Activated CD8-positive, alpha-beta T cell treated with anti-CD3 and anti-CD28 coated beads, Interleukin-2, amount 10 ng/mL, durations not matched to agents 7 days and 5 days (primary cell): ENCODE measurements at regions of chr14 and their contacts with region 1.

Region 1: GRCh38 chr14:74762917-74763802 is at the start of gene YLPM1:
- DNase-seq: peak; percentile 94
- ATAC-seq: peak; percentile 95
- H3K4me3 Mint-ChIP-seq: peak within 1 kb of the TSS; percentile 92
- H3K27ac Mint-ChIP-seq: peak within 1 kb of the TSS; percentile 86
- H3K4me1 Mint-ChIP-seq: peaks cover 40% of the 10 kb centered on the region
- H3K27me3 Mint-ChIP-seq: peaks cover 2% of the 10 kb centered on the region
- total RNA-seq, gene YLPM1: 58.2 to 58.4 TPM

Region 2: DNA sequence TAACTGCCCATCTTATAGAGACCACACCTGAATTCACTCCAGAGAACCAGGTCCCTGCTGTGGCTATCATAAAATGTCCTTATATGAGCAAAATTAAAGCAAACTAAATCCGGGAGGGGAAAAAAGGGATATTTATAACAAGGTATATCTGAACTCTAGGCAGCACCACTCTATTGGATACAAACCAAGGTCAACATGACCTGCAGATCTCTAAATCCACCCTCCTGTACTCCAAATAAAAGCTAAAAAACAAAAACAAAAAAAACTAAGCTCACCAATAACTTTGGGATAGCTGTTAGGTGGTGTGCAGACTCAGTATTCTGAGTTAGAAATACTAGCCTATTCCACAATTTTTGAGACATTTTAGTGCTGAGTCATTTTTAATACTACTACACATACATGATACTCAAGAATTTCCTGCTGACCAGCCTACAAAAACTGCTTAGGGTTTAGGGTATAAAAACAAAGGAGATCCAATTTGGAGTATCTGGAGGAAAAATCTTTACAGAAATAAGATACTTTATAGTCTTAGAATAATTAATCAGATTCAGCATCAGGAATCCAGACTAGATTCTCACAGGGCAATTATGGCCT is 104.5 kb before region 1 on chr14:
- CTCF ChIA-PET with region 1: no interaction called
- POLR2A ChIA-PET with region 1: no interaction called
- DNase-seq: no peak
- ATAC-seq: no peak
- H3K4me3 Mint-ChIP-seq: no peak overlapping the region
- H3K27ac Mint-ChIP-seq: no peak overlapping the region
- H3K4me1 Mint-ChIP-seq: no peaks in the 10 kb centered on the region
- H3K27me3 Mint-ChIP-seq: no peaks in the 10 kb centered on the region

Region 3: GRCh38 chr14:74784634-74785033 is 21.5 kb after region 1 on chr14:
- CTCF ChIA-PET with region 1: interaction called, 11 read pairs
- POLR2A ChIA-PET with region 1: interaction called, 5 read pairs
- DNase-seq: no peak
- ATAC-seq: peak; percentile 23
- H3K4me3 Mint-ChIP-seq: no peak overlapping the region
- H3K27ac Mint-ChIP-seq: peak overlapping the region; percentile 10
- H3K4me1 Mint-ChIP-seq: peaks cover 16% of the 10 kb centered on the region
- H3K27me3 Mint-ChIP-seq: no peaks in the 10 kb centered on the region

Region 4: GRCh38 chr14:74792249-74793039 is 29.3 kb after region 1 on chr14:
- CTCF ChIA-PET with region 1: interaction called, 11 read pairs
- POLR2A ChIA-PET with region 1: interaction called, 21 read pairs
- DNase-seq: peak; percentile 41
- ATAC-seq: peak; percentile 70
- H3K4me3 Mint-ChIP-seq: peak overlapping the region; percentile 71
- H3K27ac Mint-ChIP-seq: peak overlapping the region; percentile 77
- H3K4me1 Mint-ChIP-seq: peaks cover 41% of the 10 kb centered on the region
- H3K27me3 Mint-ChIP-seq: no peaks in the 10 kb centered on the region

Region 5: DNA sequence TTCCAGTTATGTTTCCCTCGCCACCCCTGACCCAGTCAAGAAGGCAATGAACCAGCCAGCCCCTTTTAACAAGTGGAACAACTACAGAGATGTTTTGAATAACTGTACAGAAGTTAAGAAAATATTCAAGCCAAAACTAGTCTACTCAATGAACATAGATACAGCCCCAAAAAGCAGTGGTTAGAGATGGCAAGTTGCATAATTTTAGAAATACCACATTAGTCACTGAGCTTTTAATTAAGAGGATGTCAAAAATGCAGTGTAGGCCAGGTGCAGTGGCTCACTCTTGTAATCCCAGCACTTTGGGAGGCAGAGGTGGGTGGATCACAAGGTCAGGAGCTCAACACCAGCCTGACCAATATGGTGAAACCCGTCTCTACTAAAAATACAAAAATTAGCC is 85.6 kb after region 1 on chr14:
- CTCF ChIA-PET with region 1: no interaction called
- POLR2A ChIA-PET with region 1: no interaction called
- DNase-seq: no peak
- ATAC-seq: no peak
- H3K4me3 Mint-ChIP-seq: no peak overlapping the region
- H3K27ac Mint-ChIP-seq: no peak overlapping the region
- H3K4me1 Mint-ChIP-seq: peaks cover 17% of the 10 kb centered on the region
- H3K27me3 Mint-ChIP-seq: no peaks in the 10 kb centered on the region

Region 6: GRCh38 chr14:74893614-74894091 is 130.5 kb after region 1 on chr14:
- CTCF ChIA-PET with region 1: no interaction called
- POLR2A ChIA-PET with region 1: no interaction called
- DNase-seq: no peak
- ATAC-seq: no peak
- H3K4me3 Mint-ChIP-seq: no peak overlapping the region
- H3K27ac Mint-ChIP-seq: no peak overlapping the region
- H3K4me1 Mint-ChIP-seq: peaks cover 17% of the 10 kb centered on the region
- H3K27me3 Mint-ChIP-seq: no peaks in the 10 kb centered on the region

Region 7: GRCh38 chr14:75223664-75224154 is 460.5 kb after region 1 on chr14:
- CTCF ChIA-PET with region 1: no interaction called
- POLR2A ChIA-PET with region 1: no interaction called
- DNase-seq: peak; percentile 40
- ATAC-seq: peak; percentile 50
- H3K4me3 Mint-ChIP-seq: no peak overlapping the region
- H3K27ac Mint-ChIP-seq: peak overlapping the region; percentile 54
- H3K4me1 Mint-ChIP-seq: peaks cover 27% of the 10 kb centered on the region
- H3K27me3 Mint-ChIP-seq: peaks cover 9% of the 10 kb centered on the region